Calu3 (cell line): ENCODE measurements at regions of chr12 and their contacts with region 1.

Region 1: DNA sequence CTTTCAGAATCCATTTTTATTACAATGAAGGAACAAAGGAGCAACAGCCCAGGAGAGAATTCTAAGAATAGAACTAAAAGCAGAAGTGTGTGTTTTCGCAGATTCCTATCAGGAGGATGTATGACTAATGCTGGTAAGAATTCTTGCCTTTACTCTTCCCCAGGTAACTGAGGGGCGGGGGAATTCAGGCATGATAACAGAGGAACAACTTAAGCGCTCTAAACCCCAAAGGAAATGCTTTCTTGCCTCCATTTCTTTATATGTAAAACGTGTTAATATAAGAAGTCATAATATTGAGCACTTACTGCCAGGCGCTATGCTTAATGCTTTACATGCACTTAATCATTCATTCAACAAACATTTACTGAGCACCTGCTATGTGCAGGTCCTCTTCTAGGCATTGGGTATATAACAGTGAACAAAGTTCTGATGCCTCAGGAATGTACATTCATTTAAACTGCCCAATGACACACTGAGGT is 4.5 kb downstream of the HCAR1 start:
- DNase-seq: peak; percentile 74
- H3K4me3 Mint-ChIP-seq: peak overlapping the region; percentile 40
- H3K27ac Mint-ChIP-seq: peak overlapping the region; percentile 81
- H3K4me1 Mint-ChIP-seq: peaks cover 61% of the 10 kb centered on the region
- H3K27me3 Mint-ChIP-seq: no peaks in the 10 kb centered on the region
- CTCF ChIP-seq: no peak

Region 2: GRCh38 chr12:122635471-122635870 is 90.6 kb before region 1 on chr12:
- CTCF ChIA-PET with region 1: interaction called, 13 read pairs
- intact Hi-C with region 1: loop called (anchors 5 kb)
- DNase-seq: no peak
- H3K4me3 Mint-ChIP-seq: no peak overlapping the region
- H3K27ac Mint-ChIP-seq: peak overlapping the region; percentile 69
- H3K4me1 Mint-ChIP-seq: peaks cover 7% of the 10 kb centered on the region
- H3K27me3 Mint-ChIP-seq: no peaks in the 10 kb centered on the region
- CTCF ChIP-seq: no peak

Region 3: DNA sequence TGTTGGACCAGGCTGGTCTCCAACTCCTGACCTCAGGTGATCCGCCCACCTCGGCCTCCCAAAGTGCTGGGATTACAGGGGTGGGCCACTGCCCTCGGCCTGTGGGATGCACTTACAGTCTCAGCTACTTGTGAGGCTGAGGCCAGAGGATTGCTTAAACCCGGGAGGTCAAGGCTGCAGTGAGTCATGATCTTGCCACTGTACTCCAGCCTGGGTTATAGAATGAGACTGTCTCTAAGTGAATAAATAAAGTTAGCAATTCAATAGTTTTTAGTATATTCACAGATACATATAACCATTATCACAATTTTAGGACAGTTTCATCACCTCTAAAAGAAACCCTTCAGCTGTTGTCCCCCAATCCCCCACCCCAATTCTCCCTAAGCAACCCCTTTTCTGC is 84.1 kb before region 1 on chr12:
- CTCF ChIA-PET with region 1: interaction called, 13 read pairs
- intact Hi-C with region 1: loop called (anchors 5 kb)
- DNase-seq: no peak
- H3K4me3 Mint-ChIP-seq: no peak overlapping the region
- H3K27ac Mint-ChIP-seq: no peak overlapping the region
- H3K4me1 Mint-ChIP-seq: peaks cover 5% of the 10 kb centered on the region
- H3K27me3 Mint-ChIP-seq: no peaks in the 10 kb centered on the region
- CTCF ChIP-seq: no peak

Region 4: GRCh38 chr12:122651520-122652224 is 74.4 kb before region 1 on chr12:
- CTCF ChIA-PET with region 1: interaction called, 3 read pairs
- intact Hi-C with region 1: loop called (anchors 5 kb)
- DNase-seq: no peak
- H3K4me3 Mint-ChIP-seq: no peak overlapping the region
- H3K27ac Mint-ChIP-seq: no peak overlapping the region
- H3K4me1 Mint-ChIP-seq: peaks cover 6% of the 10 kb centered on the region
- H3K27me3 Mint-ChIP-seq: no peaks in the 10 kb centered on the region
- CTCF ChIP-seq: no peak

Region 5: DNA sequence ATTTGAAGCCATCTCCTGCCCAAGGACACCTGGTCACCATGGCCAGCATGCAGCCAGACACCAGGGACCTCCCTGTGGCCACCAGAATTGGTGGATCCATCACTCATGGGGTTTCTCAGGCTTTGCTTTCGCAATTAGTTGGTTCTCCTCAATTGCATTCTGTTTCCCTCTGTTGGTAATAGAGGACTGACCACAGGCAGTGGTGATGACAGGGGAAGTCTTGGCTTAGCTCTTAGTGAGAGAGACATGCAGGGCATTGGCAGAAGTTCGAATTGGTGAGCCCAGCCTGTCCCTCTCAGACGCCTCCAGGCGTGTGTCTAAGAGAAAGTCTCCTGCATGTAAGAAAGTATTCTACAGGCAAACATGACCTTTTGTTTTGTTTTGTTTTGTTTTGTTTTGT is 44.3 kb before region 1 on chr12:
- CTCF ChIA-PET with region 1: interaction called, 3 read pairs
- intact Hi-C with region 1: loop called (anchors 2 kb)
- DNase-seq: no peak
- H3K4me3 Mint-ChIP-seq: no peak overlapping the region
- H3K27ac Mint-ChIP-seq: no peak overlapping the region
- H3K4me1 Mint-ChIP-seq: peaks cover 12% of the 10 kb centered on the region
- H3K27me3 Mint-ChIP-seq: no peaks in the 10 kb centered on the region
- CTCF ChIP-seq: no peak

Region 6: GRCh38 chr12:122752464-122753318 is 26.6 kb after region 1 on chr12 and contains the start of gene DENR:
- CTCF ChIA-PET with region 1: no interaction called
- intact Hi-C with region 1: loop called (anchors 1 kb)
- DNase-seq: peak; percentile 100
- H3K4me3 Mint-ChIP-seq: peak within 1 kb of the TSS; percentile 98
- H3K27ac Mint-ChIP-seq: peak within 1 kb of the TSS; percentile 99
- H3K4me1 Mint-ChIP-seq: peaks cover 63% of the 10 kb centered on the region
- H3K27me3 Mint-ChIP-seq: no peaks in the 10 kb centered on the region
- CTCF ChIP-seq: peak; percentile 76
- total RNA-seq, gene DENR: 83.2 and 85.8 TPM in 2 replicates